ENCODE measurements at regions of chr21 and their contacts with region 1.

Region 1: DNA sequence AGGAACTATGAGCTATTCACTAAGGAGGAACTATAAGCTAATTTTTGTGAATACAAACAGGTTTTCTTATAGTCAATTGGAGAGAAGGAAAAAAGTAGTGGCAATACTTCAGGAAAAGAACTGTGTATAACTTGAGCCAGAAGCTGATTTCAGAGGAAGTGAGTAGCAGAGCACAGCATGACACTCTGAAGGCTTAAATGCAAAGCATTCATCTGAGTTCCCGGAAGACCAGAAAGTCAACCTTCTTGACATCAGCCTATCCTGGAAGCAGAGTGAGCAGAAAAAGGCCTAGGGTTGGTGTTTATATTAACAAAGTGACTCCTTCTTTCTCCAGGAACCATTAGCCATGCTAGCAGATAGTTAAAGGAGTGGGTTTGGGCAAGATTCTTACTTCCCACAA is 545.2 kb downstream of the MRPL39 start:
- DNase-seq: no peak
- H3K4me3 ChIP-seq: no peak overlapping the region
- H3K27ac ChIP-seq: no peak overlapping the region
- H3K4me1 ChIP-seq: no peaks in the 10 kb centered on the region
- H3K27me3 ChIP-seq: no peaks in the 10 kb centered on the region
- CTCF ChIP-seq: no peak

Region 2: GRCh38 chr21:24840287-24840686 is 221.8 kb before region 1 on chr21:
- intact Hi-C with region 1: loop called (anchors 2 kb)
- DNase-seq: no peak
- H3K4me3 ChIP-seq: no peak overlapping the region
- H3K27ac ChIP-seq: no peak overlapping the region
- H3K4me1 ChIP-seq: no peaks in the 10 kb centered on the region
- H3K27me3 ChIP-seq: no peaks in the 10 kb centered on the region
- CTCF ChIP-seq: no peak

Region 3: GRCh38 chr21:25496825-25497482 is 434.9 kb after region 1 on chr21:
- intact Hi-C with region 1: no loop called
- DNase-seq: no peak
- H3K4me3 ChIP-seq: no peak overlapping the region
- H3K27ac ChIP-seq: no peak overlapping the region
- H3K4me1 ChIP-seq: no peaks in the 10 kb centered on the region
- H3K27me3 ChIP-seq: no peaks in the 10 kb centered on the region
- CTCF ChIP-seq: no peak